ENCODE measurements at regions of chr10 and their contacts with region 1.

Region 1: DNA sequence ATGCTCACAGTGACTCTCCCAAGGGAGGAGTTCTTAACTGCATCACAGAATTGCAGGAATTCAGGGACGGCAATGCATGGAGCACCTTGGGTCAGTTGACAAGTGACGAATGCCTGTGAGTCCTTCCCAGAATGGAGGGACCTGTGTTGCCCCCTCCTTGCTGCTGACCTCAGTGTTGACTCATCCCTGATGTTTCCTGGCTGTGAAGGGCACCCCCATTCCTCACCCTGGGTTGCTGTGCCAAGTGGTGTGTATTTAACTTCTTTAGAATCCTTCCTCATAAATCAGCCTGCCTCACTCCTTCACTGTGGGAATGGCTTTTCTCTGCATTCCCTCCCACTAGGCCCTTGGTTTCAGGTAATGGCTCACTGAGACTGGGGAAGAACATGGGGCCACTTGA is 98.9 kb downstream of the LRMDA start:
- DNase-seq: peak; percentile 98
- ATAC-seq: peak; percentile 69
- H3K4me3 ChIP-seq: no peak overlapping the region
- H3K27ac ChIP-seq: peak overlapping the region; percentile 85
- H3K4me1 ChIP-seq: peaks cover 45% of the 10 kb centered on the region
- H3K27me3 ChIP-seq: no peaks in the 10 kb centered on the region
- CTCF ChIP-seq: no peak

Region 2: GRCh38 chr10:75294518-75294865 is 235.8 kb before region 1 on chr10:
- CTCF ChIA-PET with region 1: no interaction called
- POLR2A ChIA-PET with region 1: no interaction called
- intact Hi-C with region 1: no loop called
- DNase-seq: no peak
- ATAC-seq: peak; percentile 19
- H3K4me3 ChIP-seq: peak overlapping the region; percentile 66
- H3K27ac ChIP-seq: peak overlapping the region; percentile 0; the same call in 1 of the 2 replicates
- H3K4me1 ChIP-seq: peaks cover 19% of the 10 kb centered on the region
- H3K27me3 ChIP-seq: no peaks in the 10 kb centered on the region; the same call in 1 of the 2 replicates
- CTCF ChIP-seq: no peak

Region 3: DNA sequence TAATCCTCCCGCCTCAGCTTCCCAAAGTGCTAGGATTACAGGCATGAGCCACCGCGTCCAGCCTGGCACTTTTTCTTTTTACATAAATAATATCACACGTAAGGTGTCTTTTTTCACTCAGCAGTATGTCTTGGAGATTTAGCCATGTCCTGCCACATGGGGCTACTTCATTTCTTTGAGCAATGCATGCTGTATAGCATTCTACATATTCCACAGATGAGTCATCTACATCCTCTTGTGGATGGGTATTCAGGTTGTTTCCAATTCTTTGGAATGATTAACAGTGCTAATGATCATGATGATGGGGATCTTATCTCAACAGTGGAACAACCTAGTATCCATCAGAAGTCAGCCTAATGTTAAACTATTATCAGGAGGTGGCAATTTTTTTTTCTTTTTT is 179.5 kb before region 1 on chr10:
- CTCF ChIA-PET with region 1: no interaction called
- POLR2A ChIA-PET with region 1: no interaction called
- intact Hi-C with region 1: no loop called
- DNase-seq: peak; percentile 91
- ATAC-seq: peak; percentile 86
- H3K4me3 ChIP-seq: no peak overlapping the region
- H3K27ac ChIP-seq: no peak overlapping the region
- H3K4me1 ChIP-seq: no peaks in the 10 kb centered on the region
- H3K27me3 ChIP-seq: 0 out of 2 replicates have a peak, but pooled peaks cover 10% of the 10 kb centered on the region
- CTCF ChIP-seq: peak; percentile 38; the same call in 1 of the 2 replicates

Region 4: GRCh38 chr10:75408911-75409885 is 121.1 kb before region 1 on chr10:
- CTCF ChIA-PET with region 1: no interaction called
- POLR2A ChIA-PET with region 1: interaction called, 3 read pairs
- intact Hi-C with region 1: loop called (anchors 1 kb)
- DNase-seq: peak; percentile 91
- ATAC-seq: peak; percentile 51
- H3K4me3 ChIP-seq: peak overlapping the region; percentile 74
- H3K27ac ChIP-seq: peak overlapping the region; percentile 73
- H3K4me1 ChIP-seq: peaks cover 30% of the 10 kb centered on the region
- H3K27me3 ChIP-seq: peaks cover 88% of the 10 kb centered on the region
- CTCF ChIP-seq: peak; percentile 41

Region 5: GRCh38 chr10:75449382-75450070 is 80.8 kb before region 1 on chr10:
- CTCF ChIA-PET with region 1: no interaction called
- POLR2A ChIA-PET with region 1: no interaction called
- intact Hi-C with region 1: loop called (anchors 1 kb)
- DNase-seq: no peak
- ATAC-seq: peak; percentile 29
- H3K4me3 ChIP-seq: no peak overlapping the region
- H3K27ac ChIP-seq: no peak overlapping the region
- H3K4me1 ChIP-seq: peaks cover 28% of the 10 kb centered on the region
- H3K27me3 ChIP-seq: peaks cover 21% of the 10 kb centered on the region
- CTCF ChIP-seq: no peak

Region 6: DNA sequence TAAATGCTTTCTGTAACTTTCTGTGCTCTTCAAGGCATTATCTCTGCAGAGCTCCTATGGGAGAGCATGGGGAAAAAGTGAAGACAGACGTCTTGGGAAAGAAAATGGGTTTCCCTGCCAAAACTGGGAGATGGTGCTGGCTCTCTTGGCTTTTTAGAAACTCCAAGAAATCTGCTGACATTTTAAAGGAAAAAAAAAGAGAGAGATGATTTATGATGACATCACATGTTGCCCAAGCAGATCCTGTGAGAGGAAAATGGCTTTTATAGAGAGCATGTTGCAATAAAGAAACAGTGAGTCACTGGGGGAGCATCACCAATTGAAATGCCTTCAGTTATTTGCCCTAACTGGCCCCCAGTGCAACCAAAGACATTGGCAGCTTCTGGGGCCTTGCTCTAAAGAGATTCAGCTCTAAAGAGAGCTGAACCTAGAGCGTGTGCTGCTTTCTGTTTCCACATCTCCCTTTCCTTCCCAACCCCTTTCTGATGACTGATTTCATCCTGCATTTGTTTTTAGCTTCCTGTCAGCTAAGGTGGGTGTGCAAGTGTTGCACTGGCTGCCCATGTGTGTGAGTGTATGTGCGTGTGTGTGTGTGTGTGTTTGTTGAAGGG is 61.2 kb before region 1 on chr10:
- CTCF ChIA-PET with region 1: no interaction called
- POLR2A ChIA-PET with region 1: no interaction called
- intact Hi-C with region 1: loop called (anchors 1 kb)
- DNase-seq: peak; percentile 100
- ATAC-seq: peak; percentile 88
- H3K4me3 ChIP-seq: no peak overlapping the region
- H3K27ac ChIP-seq: peak overlapping the region; percentile 54
- H3K4me1 ChIP-seq: peaks cover 25% of the 10 kb centered on the region
- H3K27me3 ChIP-seq: peaks cover 3% of the 10 kb centered on the region; the same call in 1 of the 2 replicates
- CTCF ChIP-seq: no peak

Region 7: GRCh38 chr10:75651417-75651816 is 121.1 kb after region 1 on chr10:
- CTCF ChIA-PET with region 1: no interaction called
- POLR2A ChIA-PET with region 1: no interaction called
- intact Hi-C with region 1: loop called (anchors 1 kb)
- DNase-seq: peak; percentile 64
- ATAC-seq: no peak
- H3K4me3 ChIP-seq: no peak overlapping the region
- H3K27ac ChIP-seq: no peak overlapping the region
- H3K4me1 ChIP-seq: peaks cover 48% of the 10 kb centered on the region
- H3K27me3 ChIP-seq: peaks cover 9% of the 10 kb centered on the region; the same call in 1 of the 2 replicates
- CTCF ChIP-seq: peak; percentile 71

Region 8: GRCh38 chr10:75772153-75772887 is 242.0 kb after region 1 on chr10:
- CTCF ChIA-PET with region 1: no interaction called
- POLR2A ChIA-PET with region 1: no interaction called
- intact Hi-C with region 1: loop called (anchors 2 kb)
- DNase-seq: peak; percentile 68
- ATAC-seq: no peak
- H3K4me3 ChIP-seq: peak overlapping the region; percentile 52
- H3K27ac ChIP-seq: peak overlapping the region; percentile 76
- H3K4me1 ChIP-seq: peaks cover 48% of the 10 kb centered on the region
- H3K27me3 ChIP-seq: peaks cover 17% of the 10 kb centered on the region; the same call in 1 of the 2 replicates
- CTCF ChIP-seq: no peak

Region 9: GRCh38 chr10:76086761-76087639 is 556.7 kb after region 1 on chr10:
- CTCF ChIA-PET with region 1: no interaction called
- POLR2A ChIA-PET with region 1: no interaction called
- intact Hi-C with region 1: loop called (anchors 5 kb)
- DNase-seq: peak; percentile 98
- ATAC-seq: peak; percentile 84
- H3K4me3 ChIP-seq: no peak overlapping the region
- H3K27ac ChIP-seq: no peak overlapping the region
- H3K4me1 ChIP-seq: no peaks in the 10 kb centered on the region; the same call in 1 of the 2 replicates
- H3K27me3 ChIP-seq: peaks cover 47% of the 10 kb centered on the region
- CTCF ChIP-seq: peak; percentile 100